Activated naive CD4-positive, alpha-beta T cell treated with anti-CD3 and anti-CD28 coated beads for 36 hours (primary cell): ENCODE measurements at regions of chr10 and their contacts with region 1.

Region 1: GRCh38 chr10:88687853-88688467 is 18.1 kb upstream of the LIPK start:
- DNase-seq: no peak
- H3K4me3 Mint-ChIP-seq: no peak overlapping the region
- H3K27ac Mint-ChIP-seq: no peak overlapping the region
- H3K4me1 Mint-ChIP-seq: no peaks in the 10 kb centered on the region
- H3K27me3 Mint-ChIP-seq: peaks cover 8% of the 10 kb centered on the region

Region 2: GRCh38 chr10:88565072-88565471 is 122.9 kb before region 1 on chr10:
- CTCF ChIA-PET with region 1: interaction called, 4 read pairs
- intact Hi-C with region 1: loop called (anchors 2 kb)
- DNase-seq: no peak
- H3K4me3 Mint-ChIP-seq: no peak overlapping the region
- H3K27ac Mint-ChIP-seq: no peak overlapping the region
- H3K4me1 Mint-ChIP-seq: no peaks in the 10 kb centered on the region
- H3K27me3 Mint-ChIP-seq: no peaks in the 10 kb centered on the region

Region 3: DNA sequence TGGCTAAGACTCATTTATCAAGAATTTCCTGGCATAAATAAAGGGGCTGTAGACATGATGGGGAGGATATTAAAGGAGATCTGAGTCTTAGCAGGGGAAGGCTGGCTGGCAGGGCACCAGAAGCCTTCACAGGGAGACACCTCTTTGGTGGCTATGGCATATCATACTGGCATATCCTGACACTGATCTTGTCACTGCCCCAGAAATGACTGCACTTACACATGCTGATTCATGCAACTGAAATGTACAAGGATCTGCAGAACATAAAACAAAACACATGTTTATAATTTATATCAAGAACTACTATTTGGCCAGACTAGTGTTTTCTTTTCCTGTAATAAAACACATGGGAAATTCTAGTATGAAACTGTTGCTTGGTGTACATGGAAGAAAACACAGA is 66.3 kb after region 1 on chr10:
- CTCF ChIA-PET with region 1: no interaction called
- intact Hi-C with region 1: no loop called
- DNase-seq: no peak
- H3K4me3 Mint-ChIP-seq: no peak overlapping the region
- H3K27ac Mint-ChIP-seq: no peak overlapping the region
- H3K4me1 Mint-ChIP-seq: peaks cover 6% of the 10 kb centered on the region
- H3K27me3 Mint-ChIP-seq: peaks cover 6% of the 10 kb centered on the region